Mammary epithelial cell (primary cell): ENCODE measurements at regions of chr16 and their contacts with region 1.

Region 1: GRCh38 chr16:10338426-10338825 is 47.4 kb upstream of the ATF7IP2 start:
- DNase-seq: peak; percentile 17
- H3K4me3 ChIP-seq: no peak overlapping the region
- H3K27ac ChIP-seq: no peak overlapping the region
- H3K4me1 ChIP-seq: peaks cover 6% of the 10 kb centered on the region
- H3K27me3 ChIP-seq: no peaks in the 10 kb centered on the region
- CTCF ChIP-seq: no peak

Region 2: GRCh38 chr16:9778849-9779248 is 559.6 kb before region 1 on chr16:
- CTCF ChIA-PET with region 1: no interaction called
- dilution Hi-C with region 1: no loop called
- in situ Hi-C with region 1: no loop called
- intact Hi-C with region 1: no loop called
- DNase-seq: no peak
- H3K4me3 ChIP-seq: no peak overlapping the region
- H3K27ac ChIP-seq: no peak overlapping the region
- H3K4me1 ChIP-seq: no peaks in the 10 kb centered on the region
- H3K27me3 ChIP-seq: no peaks in the 10 kb centered on the region
- CTCF ChIP-seq: no peak

Region 3: GRCh38 chr16:10130538-10130937 is 207.9 kb before region 1 on chr16:
- CTCF ChIA-PET with region 1: no interaction called
- dilution Hi-C with region 1: loop called (anchors 10 kb)
- in situ Hi-C with region 1: no loop called
- intact Hi-C with region 1: no loop called
- DNase-seq: no peak
- H3K4me3 ChIP-seq: no peak overlapping the region
- H3K27ac ChIP-seq: no peak overlapping the region
- H3K4me1 ChIP-seq: no peaks in the 10 kb centered on the region
- H3K27me3 ChIP-seq: no peaks in the 10 kb centered on the region
- CTCF ChIP-seq: no peak

Region 4: GRCh38 chr16:10269632-10270031 is 68.8 kb before region 1 on chr16:
- CTCF ChIA-PET with region 1: no interaction called
- dilution Hi-C with region 1: no loop called
- in situ Hi-C with region 1: no loop called
- intact Hi-C with region 1: no loop called
- DNase-seq: no peak
- H3K4me3 ChIP-seq: no peak overlapping the region
- H3K27ac ChIP-seq: no peak overlapping the region
- H3K4me1 ChIP-seq: peaks cover 4% of the 10 kb centered on the region
- H3K27me3 ChIP-seq: no peaks in the 10 kb centered on the region
- CTCF ChIP-seq: no peak

Region 5: GRCh38 chr16:10536814-10537389 is 198.5 kb after region 1 on chr16:
- CTCF ChIA-PET with region 1: no interaction called
- dilution Hi-C with region 1: no loop called
- in situ Hi-C with region 1: no loop called
- intact Hi-C with region 1: no loop called
- DNase-seq: peak; percentile 70
- H3K4me3 ChIP-seq: no peak overlapping the region
- H3K27ac ChIP-seq: no peak overlapping the region
- H3K4me1 ChIP-seq: peaks cover 11% of the 10 kb centered on the region
- H3K27me3 ChIP-seq: peaks cover 2% of the 10 kb centered on the region
- CTCF ChIP-seq: no peak